Caco-2 (cell line): ENCODE measurements at regions of chr14 and their contacts with region 1.

Region 1: DNA sequence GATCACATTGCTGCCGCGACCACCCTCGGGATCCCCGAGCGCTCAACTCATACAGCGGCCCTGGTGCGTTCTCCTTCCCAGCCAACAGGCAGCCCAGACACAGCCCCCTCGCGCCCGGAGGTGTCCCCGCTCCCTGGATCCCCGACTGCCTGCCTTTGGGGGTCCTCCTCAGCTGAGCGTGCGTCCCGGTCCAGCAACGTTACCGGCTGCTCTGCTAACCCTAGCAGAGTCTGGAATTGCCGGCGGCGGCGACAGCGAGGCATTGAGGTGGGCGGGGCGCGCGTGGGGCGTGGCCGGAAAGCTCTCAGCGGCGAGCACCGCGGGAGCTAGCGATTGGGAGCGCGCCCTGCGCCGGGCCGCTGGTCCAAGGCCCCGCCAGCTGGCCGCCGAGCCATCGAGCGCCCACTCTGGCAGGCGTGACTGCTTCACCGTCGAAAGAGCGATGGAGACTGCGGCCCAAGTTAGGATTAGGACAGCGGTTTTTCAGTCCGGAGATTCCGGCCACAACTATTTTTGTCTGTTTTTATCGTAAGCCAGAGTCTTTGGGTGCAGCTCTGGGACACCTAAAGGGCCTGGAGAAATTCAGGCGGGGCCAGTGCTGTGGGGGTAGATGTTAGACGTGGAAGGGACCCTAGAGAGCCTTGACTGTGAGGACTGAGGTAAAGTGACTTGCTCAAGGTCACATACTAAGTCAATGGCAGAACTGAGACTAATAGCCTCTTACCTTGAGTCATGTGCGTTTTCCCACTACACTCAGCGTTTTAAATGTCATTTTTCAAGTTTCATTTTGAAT is at the start of gene HEATR5A:
- DNase-seq: peak; percentile 95 to 98
- H3K4me3 ChIP-seq: peak within 1 kb of the TSS; percentile 79
- H3K4me3 Mint-ChIP-seq: peak within 1 kb of the TSS; percentile 93
- H3K27ac Mint-ChIP-seq: peak within 1 kb of the TSS; percentile 89
- H3K4me1 ChIP-seq: no peaks in the 10 kb centered on the region
- H3K4me1 Mint-ChIP-seq: peaks cover 17% of the 10 kb centered on the region
- H3K27me3 ChIP-seq: no peaks in the 10 kb centered on the region
- H3K27me3 Mint-ChIP-seq: no peaks in the 10 kb centered on the region
- CTCF ChIP-seq: peak in 1 of 2 experiments; percentile 31
- total RNA-seq, gene HEATR5A: 41.9 and 55.6 TPM in 2 replicates

Region 2: GRCh38 chr14:31441271-31442110 is 21.0 kb after region 1 on chr14:
- CTCF ChIA-PET with region 1: interaction called, 11 read pairs
- POLR2A ChIA-PET with region 1: interaction called, 13 read pairs
- intact Hi-C with region 1: loop called (anchors 1 kb)
- DNase-seq: peak in 1 of 2 experiments; percentile 41
- H3K4me3 ChIP-seq: no peak overlapping the region
- H3K4me3 Mint-ChIP-seq: peak overlapping the region; percentile 40
- H3K27ac Mint-ChIP-seq: peak overlapping the region; percentile 85
- H3K4me1 ChIP-seq: peaks cover 22% of the 10 kb centered on the region
- H3K4me1 Mint-ChIP-seq: no peaks in the 10 kb centered on the region
- H3K27me3 ChIP-seq: no peaks in the 10 kb centered on the region
- H3K27me3 Mint-ChIP-seq: no peaks in the 10 kb centered on the region
- CTCF ChIP-seq: no peak

Region 3: DNA sequence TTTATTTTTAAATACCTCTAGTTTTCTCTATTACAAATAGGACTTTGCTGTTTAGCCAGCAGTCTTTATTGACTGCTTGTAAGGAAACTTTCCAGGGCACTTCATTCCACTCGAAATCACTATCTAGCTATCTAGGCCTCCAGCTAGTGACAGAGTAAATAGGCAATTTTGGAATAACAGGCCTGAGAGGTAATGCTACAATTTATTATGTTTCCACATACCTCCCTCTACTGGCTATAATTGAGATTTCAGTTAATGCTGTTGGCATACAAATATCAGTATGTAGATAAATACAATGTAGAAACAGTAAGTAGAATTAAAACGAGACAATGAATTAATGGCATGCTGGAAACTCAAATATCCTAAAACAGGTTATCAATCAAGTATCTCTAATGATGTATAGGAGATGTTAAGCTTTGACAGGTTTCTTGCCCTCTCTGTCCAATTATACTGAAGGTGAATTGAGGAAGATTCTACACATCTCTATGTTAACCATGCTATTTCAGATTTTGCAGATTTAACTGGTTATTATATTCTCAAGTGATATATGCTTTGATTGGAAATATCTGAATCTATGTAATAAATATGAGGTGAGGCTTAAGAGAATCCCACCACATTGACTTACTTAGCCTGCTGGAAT is 29.6 kb after region 1 on chr14:
- CTCF ChIA-PET with region 1: interaction called, 8 read pairs
- POLR2A ChIA-PET with region 1: interaction called, 12 read pairs
- intact Hi-C with region 1: no loop called
- DNase-seq: peak in 1 of 2 experiments; percentile 44
- H3K4me3 ChIP-seq: no peak overlapping the region
- H3K4me3 Mint-ChIP-seq: no peak overlapping the region
- H3K27ac Mint-ChIP-seq: no peak overlapping the region
- H3K4me1 ChIP-seq: no peaks in the 10 kb centered on the region
- H3K4me1 Mint-ChIP-seq: no peaks in the 10 kb centered on the region
- H3K27me3 ChIP-seq: no peaks in the 10 kb centered on the region
- H3K27me3 Mint-ChIP-seq: no peaks in the 10 kb centered on the region
- CTCF ChIP-seq: peak; percentile 39 to 47

Region 4: DNA sequence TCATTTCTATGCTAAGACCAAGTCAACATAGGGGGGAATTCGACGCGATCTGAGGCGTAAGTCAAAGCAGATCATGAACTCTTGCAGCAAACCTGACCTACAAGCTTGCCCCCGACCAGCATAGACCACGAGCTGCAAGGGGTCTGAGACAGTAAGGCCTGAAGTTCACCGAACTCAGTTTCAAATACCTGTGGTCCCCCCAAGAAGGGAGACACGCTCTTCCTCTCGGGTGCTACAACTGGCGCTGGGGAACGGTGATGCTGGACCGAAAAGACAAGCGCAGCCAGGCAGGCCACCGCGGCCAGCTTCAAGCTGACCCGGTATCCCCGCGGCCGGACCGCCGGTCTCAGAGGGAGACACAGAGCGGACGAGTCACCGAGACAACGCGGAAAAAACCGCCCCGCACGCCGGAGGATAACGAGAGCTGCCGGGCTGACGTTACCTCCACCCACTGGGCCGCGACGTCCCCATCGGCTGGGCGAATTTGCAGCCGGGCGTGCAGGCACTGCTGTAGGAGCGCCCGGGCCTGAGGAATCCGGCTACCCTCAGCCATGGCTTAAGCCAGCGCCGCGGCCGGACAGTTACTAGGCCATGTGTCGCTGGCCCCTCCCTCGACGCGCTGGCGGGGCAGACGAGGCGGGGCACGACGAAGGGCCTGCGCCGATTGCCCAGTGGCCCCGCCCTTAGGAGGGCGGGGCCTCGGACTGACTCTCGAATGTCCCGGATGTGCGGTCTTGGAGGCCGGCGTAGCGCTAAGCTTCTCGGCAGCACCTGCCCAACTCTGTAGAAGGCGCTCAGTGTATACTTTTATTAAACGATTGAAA is 36.5 kb after region 1 on chr14 and contains the start of gene DTD2:
- CTCF ChIA-PET with region 1: interaction called, 4 read pairs
- POLR2A ChIA-PET with region 1: interaction called, 15 read pairs
- intact Hi-C with region 1: loop called (anchors 1 kb)
- DNase-seq: peak; percentile 94 to 95
- H3K4me3 ChIP-seq: peak within 1 kb of the TSS; percentile 60
- H3K4me3 Mint-ChIP-seq: peak within 1 kb of the TSS; percentile 92
- H3K27ac Mint-ChIP-seq: peak within 1 kb of the TSS; percentile 97
- H3K4me1 ChIP-seq: peaks cover 13% of the 10 kb centered on the region
- H3K4me1 Mint-ChIP-seq: peaks cover 25% of the 10 kb centered on the region
- H3K27me3 ChIP-seq: no peaks in the 10 kb centered on the region
- H3K27me3 Mint-ChIP-seq: no peaks in the 10 kb centered on the region
- CTCF ChIP-seq: no peak
- total RNA-seq, gene DTD2: 16.5 and 20.0 TPM in 2 replicates